ENCODE measurements at regions of chr2 and their contacts with region 1.

Region 1: DNA sequence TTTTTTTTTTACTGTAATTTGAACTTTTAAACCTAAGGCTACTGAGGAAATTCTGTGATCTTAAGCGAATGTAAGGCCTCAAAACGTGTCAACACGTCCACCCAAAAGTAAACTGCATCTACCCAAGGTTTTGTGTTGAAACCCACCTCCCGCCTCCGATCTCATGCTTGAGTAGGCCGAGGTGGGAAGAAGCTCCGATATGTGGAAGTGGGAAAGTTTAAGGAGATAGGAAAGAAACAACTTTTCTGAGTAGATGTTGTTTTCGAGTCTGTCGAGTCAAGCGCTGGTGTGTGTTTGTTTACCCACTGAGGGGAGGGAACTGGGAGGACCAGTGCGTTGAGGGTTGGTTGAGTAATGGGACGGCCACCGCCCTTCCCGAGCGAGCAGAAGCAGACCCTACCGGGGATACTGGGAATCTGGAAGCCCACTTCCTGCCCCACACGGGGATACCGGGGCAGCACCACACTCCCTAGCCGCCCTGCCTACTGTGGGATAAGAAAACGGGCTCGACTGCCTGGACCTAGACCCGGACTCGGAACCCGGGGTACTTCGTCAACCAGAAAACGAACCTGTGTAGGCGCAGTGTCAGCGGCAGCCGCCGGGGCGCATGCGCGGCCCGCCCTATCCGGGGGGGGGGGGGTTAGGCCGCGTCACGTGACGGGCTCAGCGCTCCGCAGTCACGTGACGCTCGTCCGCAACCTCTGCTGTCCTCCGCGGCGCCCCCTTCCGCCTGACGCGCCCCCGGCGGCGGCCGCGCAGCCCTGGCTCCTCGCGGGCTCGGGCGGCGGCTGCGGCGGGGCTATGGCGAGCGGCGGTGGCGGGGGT is at the start of gene RETREG2:
- DNase-seq: peak; percentile 81 to 86
- H3K4me3 ChIP-seq: peak within 1 kb of the TSS; percentile 95
- H3K27ac ChIP-seq: peak within 1 kb of the TSS; percentile 77
- H3K4me1 ChIP-seq: peaks cover 19% of the 10 kb centered on the region
- H3K27me3 ChIP-seq: no peaks in the 10 kb centered on the region
- CTCF ChIP-seq: no peak
- total RNA-seq, gene RETREG2: 77.0 and 84.4 TPM in 2 replicates

Region 2: GRCh38 chr2:219160186-219161017 is 17.4 kb before region 1 on chr2 and contains the start of gene NHEJ1:
- CTCF ChIA-PET with region 1: no interaction called
- POLR2A ChIA-PET with region 1: no interaction called
- intact Hi-C with region 1: loop called (anchors 1 kb)
- DNase-seq: peak; percentile 79 to 95
- H3K4me3 ChIP-seq: peak within 1 kb of the TSS; percentile 72
- H3K27ac ChIP-seq: peak within 1 kb of the TSS; percentile 57
- H3K4me1 ChIP-seq: 0 out of 2 replicates have a peak, but pooled peaks cover 8% of the 10 kb centered on the region
- H3K27me3 ChIP-seq: no peaks in the 10 kb centered on the region
- CTCF ChIP-seq: peak; percentile 96
- total RNA-seq, gene NHEJ1: 9.8 and 11.2 TPM in 2 replicates

Region 3: DNA sequence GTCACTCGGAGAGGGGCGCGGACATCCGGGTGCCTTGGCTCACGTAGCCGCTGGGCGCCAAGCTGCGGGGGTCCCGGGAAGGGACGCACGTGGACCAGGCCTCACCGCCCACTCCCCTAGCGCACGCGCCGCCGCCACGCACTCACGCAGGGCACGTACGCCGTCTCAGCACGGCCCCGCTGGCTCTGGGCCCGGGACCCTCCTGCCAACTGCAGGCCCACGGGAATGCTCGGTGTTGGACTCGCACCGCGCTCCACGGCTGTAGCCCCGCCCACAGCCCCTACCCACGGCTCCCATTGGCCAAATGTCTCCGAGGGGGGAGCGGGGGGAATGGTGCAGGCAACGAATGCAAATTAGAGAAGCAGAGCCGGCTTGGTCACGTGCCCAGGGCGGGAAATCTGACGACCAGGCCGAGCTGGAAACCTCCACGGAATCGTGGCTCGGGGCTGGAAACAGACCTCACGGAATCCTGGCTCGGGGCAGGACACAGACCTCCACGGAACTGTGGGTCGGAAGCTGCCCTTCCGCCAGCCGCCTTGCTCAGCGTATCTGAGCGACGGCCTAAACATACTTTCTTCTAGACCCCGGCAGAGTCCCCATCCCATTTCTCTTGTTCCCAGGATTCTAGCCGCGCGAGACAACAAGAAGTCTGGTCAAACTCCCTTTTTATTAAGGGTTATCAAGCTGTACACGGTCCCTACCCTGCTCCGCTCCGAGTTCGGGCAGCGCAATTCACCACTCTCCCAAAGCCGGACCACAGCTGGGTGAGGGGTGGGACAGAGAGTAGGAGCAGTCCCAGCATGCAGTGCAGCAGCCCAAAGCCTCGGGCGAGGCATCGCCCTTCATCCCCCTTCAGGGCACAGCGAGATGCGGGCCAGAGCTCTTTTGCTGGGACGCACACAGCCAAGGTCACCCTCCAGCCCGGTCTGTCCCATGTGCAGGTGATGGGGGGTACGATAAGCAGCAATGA is 41.3 kb after region 1 on chr2 and contains the start of gene ABCB6:
- CTCF ChIA-PET with region 1: interaction called, 5 read pairs
- POLR2A ChIA-PET with region 1: no interaction called
- intact Hi-C with region 1: loop called (anchors 1 kb)
- DNase-seq: peak; percentile 67 to 91
- H3K4me3 ChIP-seq: peak within 1 kb of the TSS; percentile 64
- H3K27ac ChIP-seq: peak within 1 kb of the TSS; percentile 90
- H3K4me1 ChIP-seq: peaks cover 13% of the 10 kb centered on the region
- H3K27me3 ChIP-seq: no peaks in the 10 kb centered on the region
- CTCF ChIP-seq: no peak
- total RNA-seq, gene ABCB6: 33.7 and 41.4 TPM in 2 replicates

Region 4: DNA sequence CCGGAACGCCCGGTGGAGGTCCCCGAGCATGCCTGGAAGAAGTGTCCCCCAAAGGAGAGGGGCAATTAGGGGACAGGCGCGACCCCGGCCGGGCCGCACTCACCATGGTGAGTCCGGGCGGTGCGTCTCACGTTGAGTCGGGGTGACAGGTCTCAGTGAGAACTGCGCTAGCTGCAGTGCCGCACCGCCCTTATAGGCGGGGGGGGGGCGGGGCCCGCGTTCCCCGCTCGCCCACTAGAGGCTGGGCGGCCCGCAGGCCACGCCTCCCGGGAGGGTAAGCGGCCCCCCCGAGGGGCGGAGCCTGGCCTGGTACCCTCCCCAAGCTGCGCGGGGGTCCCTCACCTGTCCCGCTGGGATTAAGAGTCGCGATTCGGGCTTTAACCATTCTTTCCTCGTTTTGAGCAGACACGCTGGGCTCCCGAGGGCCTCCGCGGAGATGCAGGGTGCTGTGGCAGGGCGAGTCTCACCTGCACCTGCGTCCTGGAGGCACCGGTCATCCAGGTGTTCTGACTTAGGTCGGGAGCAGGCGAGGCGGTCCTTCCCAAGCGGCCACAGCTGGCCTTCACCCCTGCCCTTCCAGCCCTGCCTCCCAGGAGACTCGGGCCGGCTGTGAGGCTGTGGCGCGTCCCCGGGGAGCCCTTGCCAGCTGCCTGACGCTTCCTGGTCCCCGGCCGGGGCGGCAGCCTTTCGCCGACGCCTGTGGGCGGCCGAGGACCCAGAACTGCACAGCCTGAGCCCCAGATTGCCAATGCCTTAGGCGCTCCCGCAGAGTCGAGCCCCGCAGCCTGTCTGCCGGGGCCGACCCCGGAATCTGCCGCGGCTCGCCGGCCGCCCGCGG is 76.2 kb after region 1 on chr2 and contains the start of gene TUBA4A:
- CTCF ChIA-PET with region 1: no interaction called
- POLR2A ChIA-PET with region 1: no interaction called
- intact Hi-C with region 1: loop called (anchors 2 kb)
- DNase-seq: peak; percentile 65 to 87
- H3K4me3 ChIP-seq: peak within 1 kb of the TSS; percentile 87
- H3K27ac ChIP-seq: peak within 1 kb of the TSS; percentile 43
- H3K4me1 ChIP-seq: peaks cover 46% of the 10 kb centered on the region
- H3K27me3 ChIP-seq: no peaks in the 10 kb centered on the region
- CTCF ChIP-seq: no peak
- total RNA-seq, gene TUBA4A: 118 and 157 TPM in 2 replicates

Region 5: DNA sequence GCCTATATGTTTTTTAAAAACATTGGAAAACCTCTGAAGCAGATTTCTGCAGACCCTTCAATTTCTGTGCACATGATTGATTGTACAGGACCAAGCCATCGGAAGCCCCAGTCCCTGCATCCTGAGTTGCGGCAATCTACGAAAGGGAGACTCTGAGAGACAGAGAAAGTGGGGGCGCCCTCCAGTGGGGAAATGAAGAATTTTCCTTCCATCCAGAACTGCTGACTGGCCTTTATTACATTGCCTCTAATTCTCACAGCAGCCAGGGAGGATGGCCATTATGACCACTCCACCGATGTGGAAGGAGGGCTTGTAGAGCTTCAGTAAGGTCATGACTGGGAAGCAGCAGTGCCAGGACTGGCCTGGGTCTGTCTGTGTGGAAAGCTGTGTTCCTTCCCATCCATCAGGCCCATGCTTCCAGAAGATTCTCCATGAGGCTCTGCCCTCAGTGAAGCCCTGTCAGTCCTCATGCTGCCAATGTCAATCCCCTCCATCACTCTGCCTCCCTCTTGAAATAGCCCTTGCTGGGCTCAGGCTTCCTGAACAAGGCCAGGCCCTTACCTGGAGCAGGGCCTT is 174.8 kb after region 1 on chr2:
- CTCF ChIA-PET with region 1: no interaction called
- POLR2A ChIA-PET with region 1: no interaction called
- intact Hi-C with region 1: loop called (anchors 5 kb)
- DNase-seq: peak; percentile 40 to 68
- H3K4me3 ChIP-seq: no peak overlapping the region
- H3K27ac ChIP-seq: no peak overlapping the region
- H3K4me1 ChIP-seq: no peaks in the 10 kb centered on the region
- H3K27me3 ChIP-seq: peaks cover 55% of the 10 kb centered on the region
- CTCF ChIP-seq: peak; percentile 85

Region 6: GRCh38 chr2:219368690-219369195 is 191.0 kb after region 1 on chr2:
- CTCF ChIA-PET with region 1: no interaction called
- POLR2A ChIA-PET with region 1: interaction called, 3 read pairs
- intact Hi-C with region 1: loop called (anchors 1 kb)
- DNase-seq: peak; percentile 46 to 65
- H3K4me3 ChIP-seq: no peak overlapping the region
- H3K27ac ChIP-seq: no peak overlapping the region
- H3K4me1 ChIP-seq: peaks cover 4% of the 10 kb centered on the region
- H3K27me3 ChIP-seq: no peaks in the 10 kb centered on the region
- CTCF ChIP-seq: no peak

Region 7: DNA sequence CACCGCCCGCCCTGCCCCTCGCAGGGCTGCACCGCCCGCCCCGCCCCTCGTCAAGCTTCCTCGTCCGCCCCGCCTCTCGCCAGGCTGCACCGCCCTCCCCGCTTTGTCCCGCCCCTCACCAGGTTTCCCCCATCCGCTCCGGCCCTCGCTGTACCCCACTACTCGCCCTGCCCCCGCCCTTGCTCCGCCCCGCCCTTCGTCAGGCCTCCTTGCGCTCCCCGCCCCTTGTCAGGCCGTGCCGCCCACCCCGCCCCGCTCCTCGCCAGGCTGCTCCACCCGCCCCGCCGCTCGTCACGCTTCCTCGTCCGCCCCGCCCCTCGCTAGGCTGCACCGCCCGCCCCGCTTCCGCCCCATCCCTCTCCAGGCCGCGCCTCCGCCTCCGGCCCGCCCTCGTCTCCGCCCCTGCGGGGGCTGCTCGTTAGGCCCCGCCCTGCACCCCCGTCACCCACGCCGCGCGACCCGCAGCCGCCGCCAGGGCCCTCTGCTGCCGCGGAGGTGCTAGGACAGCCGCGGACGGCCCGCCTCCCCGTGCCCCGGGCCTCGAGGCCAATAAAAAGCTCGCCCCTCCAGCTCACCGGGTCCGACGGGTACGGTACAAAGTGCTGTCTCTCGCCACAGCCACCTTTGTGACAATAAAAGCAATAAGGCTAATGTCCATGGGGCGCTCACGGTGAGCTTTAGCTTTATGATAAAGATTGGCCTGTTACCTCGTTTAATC is 210.5 kb after region 1 on chr2:
- CTCF ChIA-PET with region 1: no interaction called
- POLR2A ChIA-PET with region 1: no interaction called
- intact Hi-C with region 1: loop called (anchors 2 kb)
- DNase-seq: peak; percentile 71 to 98
- H3K4me3 ChIP-seq: peak overlapping the region; percentile 53
- H3K27ac ChIP-seq: peak overlapping the region; percentile 30
- H3K4me1 ChIP-seq: peaks cover 6% of the 10 kb centered on the region; the same call in 1 of the 2 replicates
- H3K27me3 ChIP-seq: no peaks in the 10 kb centered on the region
- CTCF ChIP-seq: peak; percentile 60

Measured in PC-9 (cell line).